Activated T-helper 2 cell treated with anti-CD3 and anti-CD28 coated beads, Interferon-gamma antibody, Interleukin-2, Interleukin-4, amounts not matched to agents 10 μg/mL and 5 μg/mL and 100 μg/mL, durations not matched to agents 14 hours and 24 hours and 36 hours (primary cell): ENCODE measurements at regions of chr9 and their contacts with region 1.

Region 1: DNA sequence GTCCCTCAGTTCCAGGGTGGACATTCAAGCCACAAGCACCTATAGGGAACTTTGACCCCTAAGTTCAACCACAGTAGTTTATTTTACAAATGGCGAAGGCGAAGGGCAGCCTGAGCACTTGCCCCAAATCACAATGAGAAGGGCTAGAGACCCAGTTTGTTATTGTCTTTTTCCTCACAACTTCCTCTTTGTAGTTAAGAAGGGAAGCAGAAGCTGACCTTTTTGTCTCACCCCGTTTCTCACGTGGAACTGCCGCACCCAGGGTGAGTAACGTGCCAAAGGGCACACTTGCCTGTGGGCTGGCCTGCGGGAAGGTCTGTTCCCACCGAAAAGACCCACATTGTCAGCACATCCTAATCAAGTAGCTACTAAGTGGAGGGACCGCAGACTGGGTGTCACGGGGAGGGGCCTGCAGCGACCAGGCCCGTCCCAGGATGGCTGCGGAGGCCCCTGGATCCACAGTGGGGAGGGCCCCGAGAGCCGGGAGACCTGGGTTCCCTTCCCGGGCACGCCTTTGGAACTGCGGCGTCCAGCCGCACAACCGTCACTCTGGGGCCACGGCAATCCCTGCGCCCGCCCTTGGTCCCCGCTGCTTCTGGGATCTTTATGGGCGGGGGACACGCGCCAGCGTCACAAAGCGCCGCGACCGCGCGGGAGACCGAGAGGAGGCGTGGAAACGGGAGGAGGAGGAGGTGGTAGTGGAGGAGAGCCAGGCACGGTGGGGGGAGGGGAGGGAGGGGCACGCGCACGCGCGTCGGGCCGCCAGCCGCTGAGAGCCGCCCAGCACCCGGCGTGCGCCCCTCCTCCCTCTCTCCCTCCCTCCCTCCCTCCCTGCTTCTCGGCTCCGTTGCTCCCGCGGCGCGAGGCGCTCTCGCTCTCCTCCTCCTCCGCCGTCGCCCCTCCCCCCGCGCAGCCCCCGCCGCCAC is at the start of gene UBE2R2:
- DNase-seq: peak; percentile 91
- H3K4me3 Mint-ChIP-seq: peak within 1 kb of the TSS; percentile 82
- H3K27ac Mint-ChIP-seq: peak within 1 kb of the TSS; percentile 89
- H3K4me1 Mint-ChIP-seq: peaks cover 38% of the 10 kb centered on the region
- H3K27me3 Mint-ChIP-seq: peaks cover 2% of the 10 kb centered on the region
- total RNA-seq, gene UBE2R2: 43.1 and 44.1 TPM in 2 replicates

Region 2: GRCh38 chr9:33290247-33291030 is 526.2 kb before region 1 on chr9 and contains the start of gene NFX1:
- intact Hi-C with region 1: no loop called
- DNase-seq: peak; percentile 98
- H3K4me3 Mint-ChIP-seq: peak within 1 kb of the TSS; percentile 96
- H3K27ac Mint-ChIP-seq: peak within 1 kb of the TSS; percentile 100
- H3K4me1 Mint-ChIP-seq: peaks cover 45% of the 10 kb centered on the region
- H3K27me3 Mint-ChIP-seq: peaks cover 2% of the 10 kb centered on the region
- total RNA-seq, gene NFX1: 36.9 and 37.2 TPM in 2 replicates

Region 3: GRCh38 chr9:33852216-33852826 is 35.7 kb after region 1 on chr9:
- intact Hi-C with region 1: loop called (anchors 1 kb)
- DNase-seq: no peak
- H3K4me3 Mint-ChIP-seq: no peak overlapping the region
- H3K27ac Mint-ChIP-seq: no peak overlapping the region
- H3K4me1 Mint-ChIP-seq: peaks cover 12% of the 10 kb centered on the region
- H3K27me3 Mint-ChIP-seq: no peaks in the 10 kb centered on the region

Region 4: DNA sequence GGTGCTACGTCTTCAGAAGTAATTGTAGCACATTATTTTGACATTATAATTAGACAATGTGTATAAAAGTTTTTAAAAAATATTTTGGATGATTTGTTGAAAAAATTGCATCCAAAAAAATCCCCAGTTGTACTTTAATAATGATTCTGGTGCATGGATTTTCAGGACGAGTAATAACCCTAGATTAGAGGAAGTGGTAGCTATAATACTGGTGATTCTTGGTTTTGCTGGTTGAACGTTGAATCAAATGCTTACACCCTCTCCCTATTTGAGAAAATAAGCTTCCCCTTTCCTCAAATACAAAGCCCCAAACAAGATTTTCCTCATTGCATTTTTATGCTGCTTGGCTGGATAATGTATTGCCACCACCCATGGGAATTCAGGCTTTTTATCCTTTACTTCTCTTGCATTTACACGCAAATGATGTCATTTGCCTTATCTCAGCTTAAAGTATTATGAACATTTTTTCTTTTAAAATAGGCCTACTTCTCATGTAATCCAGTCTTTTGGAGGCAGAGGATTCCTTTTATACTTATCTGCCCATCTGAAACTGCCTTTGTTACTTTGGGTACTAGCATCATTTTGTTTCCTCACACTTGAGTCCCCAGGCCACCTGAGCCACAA is 86.7 kb after region 1 on chr9:
- intact Hi-C with region 1: loop called (anchors 5 kb)
- DNase-seq: no peak
- H3K4me3 Mint-ChIP-seq: no peak overlapping the region
- H3K27ac Mint-ChIP-seq: no peak overlapping the region
- H3K4me1 Mint-ChIP-seq: peaks cover 8% of the 10 kb centered on the region
- H3K27me3 Mint-ChIP-seq: no peaks in the 10 kb centered on the region

Region 5: GRCh38 chr9:33924978-33925797 is 108.6 kb after region 1 on chr9:
- intact Hi-C with region 1: loop called (anchors 5 kb)
- DNase-seq: no peak
- H3K4me3 Mint-ChIP-seq: no peak overlapping the region
- H3K27ac Mint-ChIP-seq: no peak overlapping the region
- H3K4me1 Mint-ChIP-seq: no peaks in the 10 kb centered on the region
- H3K27me3 Mint-ChIP-seq: no peaks in the 10 kb centered on the region

Region 6: GRCh38 chr9:34048923-34049697 is 232.5 kb after region 1 on chr9:
- intact Hi-C with region 1: loop called (anchors 1 kb)
- DNase-seq: peak; percentile 96
- H3K4me3 Mint-ChIP-seq: peak overlapping the region; percentile 91
- H3K27ac Mint-ChIP-seq: peak overlapping the region; percentile 98
- H3K4me1 Mint-ChIP-seq: peaks cover 39% of the 10 kb centered on the region
- H3K27me3 Mint-ChIP-seq: no peaks in the 10 kb centered on the region

Region 7: DNA sequence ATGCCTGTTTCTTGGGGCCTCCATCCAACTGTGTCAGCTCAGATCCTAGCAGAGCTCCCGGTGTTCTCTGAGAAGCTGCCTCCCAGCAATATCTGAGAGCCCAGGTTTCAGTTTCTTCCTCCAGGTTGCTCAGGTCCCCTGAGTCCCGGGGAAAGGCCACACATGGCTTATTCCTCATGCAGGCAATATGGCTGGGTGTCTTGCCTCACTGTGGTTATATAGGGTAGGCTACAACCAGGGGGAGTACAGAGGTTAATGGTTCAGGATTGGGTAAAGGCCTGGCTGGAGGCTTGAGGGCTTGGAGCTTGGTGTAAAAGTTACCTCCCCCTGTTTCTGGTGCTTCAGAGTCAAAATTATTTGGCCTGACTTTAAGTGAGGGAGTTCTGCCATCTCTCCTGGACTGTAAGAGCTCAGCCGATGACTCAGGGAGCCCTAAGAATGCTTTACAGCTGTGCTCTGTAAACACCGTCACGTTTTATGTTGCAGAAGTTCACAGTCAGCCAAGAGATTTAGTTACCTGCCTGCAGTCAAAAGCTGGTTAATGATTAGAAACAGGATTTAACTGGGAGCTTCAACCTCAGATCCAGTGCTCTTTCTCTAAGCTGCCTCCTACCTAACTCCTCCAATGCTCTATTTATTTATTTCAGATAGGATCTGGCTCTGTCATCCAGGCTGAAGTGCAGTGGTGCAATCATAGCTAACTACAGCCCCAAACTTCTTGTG is 256.4 kb after region 1 on chr9:
- intact Hi-C with region 1: loop called (anchors 5 kb)
- DNase-seq: no peak
- H3K4me3 Mint-ChIP-seq: no peak overlapping the region
- H3K27ac Mint-ChIP-seq: no peak overlapping the region
- H3K4me1 Mint-ChIP-seq: no peaks in the 10 kb centered on the region
- H3K27me3 Mint-ChIP-seq: no peaks in the 10 kb centered on the region

Region 8: GRCh38 chr9:34085581-34086500 is 269.3 kb after region 1 on chr9:
- intact Hi-C with region 1: no loop called
- DNase-seq: no peak
- H3K4me3 Mint-ChIP-seq: no peak overlapping the region
- H3K27ac Mint-ChIP-seq: no peak overlapping the region
- H3K4me1 Mint-ChIP-seq: peaks cover 5% of the 10 kb centered on the region
- H3K27me3 Mint-ChIP-seq: no peaks in the 10 kb centered on the region

Region 9: DNA sequence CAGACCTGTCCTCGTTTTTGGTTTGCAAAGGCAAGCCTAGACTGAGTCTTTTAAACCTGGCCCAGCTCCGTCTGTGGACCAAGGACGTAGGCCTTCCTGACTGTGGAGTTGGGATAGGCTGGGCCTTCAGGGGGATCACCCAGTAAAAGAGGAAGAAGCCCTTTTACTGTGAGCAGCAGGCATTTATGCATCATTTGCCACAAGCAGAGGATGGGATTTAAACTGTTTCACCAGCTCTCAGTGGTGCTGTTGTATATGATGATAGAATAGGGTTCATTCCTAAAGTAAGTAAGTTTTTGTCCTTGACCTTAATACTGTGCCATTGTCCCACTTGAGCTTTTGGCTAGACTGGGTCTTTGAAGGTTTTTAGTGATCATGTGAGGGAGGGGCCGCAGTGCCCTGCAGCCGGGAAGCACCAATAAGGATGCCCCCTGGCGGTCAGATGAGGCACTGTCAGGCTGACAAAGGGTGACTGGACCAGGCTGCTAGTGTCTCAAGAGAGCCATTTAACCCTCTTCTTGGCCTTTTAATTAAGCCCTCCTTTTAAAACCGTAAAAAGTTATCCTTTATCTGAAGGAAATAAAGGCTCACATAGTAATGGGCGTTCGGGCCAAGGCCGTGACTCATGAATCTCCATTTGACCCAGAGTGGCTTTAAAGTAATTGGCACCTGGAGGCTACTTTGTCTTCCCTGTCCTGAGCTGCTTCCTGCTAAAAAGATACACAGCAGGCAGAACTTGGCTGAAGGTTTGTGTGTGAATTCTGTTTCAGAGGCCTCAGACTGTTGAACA is 436.3 kb after region 1 on chr9:
- intact Hi-C with region 1: no loop called
- DNase-seq: peak; percentile 58
- H3K4me3 Mint-ChIP-seq: no peak overlapping the region
- H3K27ac Mint-ChIP-seq: no peak overlapping the region
- H3K4me1 Mint-ChIP-seq: no peaks in the 10 kb centered on the region
- H3K27me3 Mint-ChIP-seq: no peaks in the 10 kb centered on the region